AG04450 (cell line): ENCODE measurements at regions of chr7 and their contacts with region 1.

Region 1: DNA sequence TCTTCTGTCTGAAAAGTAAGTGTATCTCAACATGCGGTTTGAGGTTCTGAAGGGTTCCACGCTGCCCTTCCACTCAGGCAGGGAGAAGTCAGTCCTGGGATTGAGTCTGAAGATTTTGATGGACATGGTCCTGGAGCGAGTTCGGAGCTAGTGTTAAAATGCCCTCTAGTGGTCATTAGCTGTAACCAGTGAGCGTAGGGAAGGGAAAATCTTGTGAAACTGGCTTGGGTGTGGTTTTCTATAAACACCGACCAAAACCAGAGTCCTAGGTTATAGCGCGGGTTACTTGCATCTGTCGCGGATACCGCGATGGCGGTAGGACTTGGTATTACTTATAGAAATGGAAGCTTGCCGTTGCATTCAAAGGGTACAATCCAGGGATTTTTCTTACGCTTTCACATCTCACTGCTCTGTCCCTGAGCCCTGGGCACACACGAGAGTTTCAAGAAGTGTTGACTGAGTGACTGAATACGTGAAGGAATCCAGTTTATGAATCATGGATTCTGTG is 348.2 kb upstream of the C7orf33 start:
- DNase-seq: no peak
- H3K4me3 ChIP-seq: no peak overlapping the region
- H3K27ac ChIP-seq: no peak overlapping the region
- H3K27me3 ChIP-seq: no peaks in the 10 kb centered on the region
- CTCF ChIP-seq: peak; percentile 64

Region 2: GRCh38 chr7:147013825-147014224 is 1228.5 kb before region 1 on chr7:
- CTCF ChIA-PET with region 1: interaction called, 10 read pairs
- POLR2A ChIA-PET with region 1: no interaction called
- DNase-seq: no peak
- H3K4me3 ChIP-seq: no peak overlapping the region
- H3K27ac ChIP-seq: no peak overlapping the region
- H3K27me3 ChIP-seq: no peaks in the 10 kb centered on the region
- CTCF ChIP-seq: no peak

Region 3: GRCh38 chr7:147432079-147432478 is 810.3 kb before region 1 on chr7:
- CTCF ChIA-PET with region 1: interaction called, 12 read pairs
- POLR2A ChIA-PET with region 1: no interaction called
- DNase-seq: no peak
- H3K4me3 ChIP-seq: no peak overlapping the region
- H3K27ac ChIP-seq: no peak overlapping the region
- H3K27me3 ChIP-seq: no peaks in the 10 kb centered on the region
- CTCF ChIP-seq: peak; percentile 51